ENCODE measurements at regions of chrX and their contacts with region 1.

Region 1: GRCh38 chrX:123171781-123172180 is 12.3 kb upstream of the GRIA3 start:
- DNase-seq: no peak
- H3K4me3 ChIP-seq: no peak overlapping the region
- H3K27me3 ChIP-seq: no peaks in the 10 kb centered on the region
- CTCF ChIP-seq: no peak

Region 2: DNA sequence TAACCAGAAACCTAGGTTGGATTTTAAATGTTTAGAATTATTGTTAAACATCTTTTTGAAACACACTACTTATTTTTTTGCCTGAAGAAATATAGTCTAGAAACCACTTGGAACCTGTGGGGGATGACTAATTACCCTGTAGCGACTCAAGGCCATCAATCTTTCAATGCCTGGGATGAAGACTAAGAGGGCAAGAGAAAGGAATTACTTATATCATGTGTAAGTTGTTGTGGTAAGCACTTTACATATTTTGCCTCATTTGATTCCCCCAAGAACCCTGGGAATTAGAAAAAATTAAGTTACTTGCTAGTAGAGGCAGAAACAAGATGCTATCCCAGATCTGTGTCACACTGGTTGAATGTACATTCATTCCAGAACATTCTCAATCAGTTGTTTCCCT is 158.6 kb before region 1 on chrX:
- CTCF ChIA-PET with region 1: no interaction called
- POLR2A ChIA-PET with region 1: no interaction called
- DNase-seq: no peak
- H3K4me3 ChIP-seq: no peak overlapping the region
- H3K27me3 ChIP-seq: no peaks in the 10 kb centered on the region
- CTCF ChIP-seq: no peak

Region 3: DNA sequence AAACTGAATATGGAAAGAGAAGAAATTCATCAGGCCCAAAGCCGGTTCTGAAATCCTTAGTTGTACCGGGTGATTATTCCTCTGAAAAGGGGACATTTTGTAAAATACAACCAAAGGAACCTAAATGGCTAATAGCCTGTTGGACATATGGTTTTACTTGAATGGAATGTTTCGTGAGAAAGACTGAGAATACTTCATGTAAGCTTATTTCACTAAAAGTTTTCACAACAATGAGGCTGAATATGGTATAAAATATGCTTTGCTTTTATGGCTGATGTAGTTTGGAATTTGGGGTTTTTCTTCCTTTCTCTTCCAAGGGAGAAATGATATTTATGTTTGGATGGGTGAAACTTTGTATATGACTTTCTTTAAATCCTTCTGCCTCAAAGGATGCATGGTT is 15.0 kb after region 1 on chrX:
- CTCF ChIA-PET with region 1: interaction called, 3 read pairs
- POLR2A ChIA-PET with region 1: interaction called, 10 read pairs
- DNase-seq: no peak
- H3K4me3 ChIP-seq: peak overlapping the region; percentile 66
- H3K27me3 ChIP-seq: no peaks in the 10 kb centered on the region
- CTCF ChIP-seq: no peak